AG04449 (cell line): ENCODE measurements at regions of chr1 and their contacts with region 1.

Region 1: DNA sequence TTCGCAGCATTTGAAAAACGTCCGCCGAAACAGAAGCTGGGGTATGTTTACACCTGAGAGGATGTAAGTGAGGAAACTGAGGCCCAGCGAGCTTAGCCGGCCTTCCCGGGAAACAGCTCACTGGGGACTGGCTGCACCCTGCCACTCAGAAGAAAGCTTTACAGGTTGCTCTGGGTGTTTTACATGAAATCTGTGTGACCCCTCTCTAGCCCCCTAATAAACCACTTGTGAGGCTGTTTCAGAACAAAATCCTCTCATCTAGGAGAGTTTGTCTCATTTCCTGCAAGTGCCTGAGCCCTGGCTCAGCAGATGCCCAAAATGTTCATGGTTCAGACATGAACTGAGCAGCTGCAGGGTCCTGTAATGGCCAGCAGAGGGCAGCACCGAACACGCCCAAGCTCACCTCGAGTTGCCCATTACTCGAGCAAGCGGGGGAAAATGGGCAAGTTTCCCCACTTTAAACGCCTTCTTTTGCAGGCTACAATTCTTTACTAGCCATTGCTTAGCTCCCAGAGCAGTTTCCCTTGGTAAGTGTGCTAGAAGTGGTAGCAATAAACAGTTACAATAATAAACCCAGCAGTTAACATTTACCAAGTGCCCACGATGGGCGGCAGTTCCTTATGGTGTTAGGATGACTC is 76.4 kb downstream of the FHAD1 start:
- DNase-seq: peak; percentile 46
- H3K4me3 ChIP-seq: no peak overlapping the region
- CTCF ChIP-seq: peak; percentile 97

Region 2: GRCh38 chr1:15128520-15129313 is 194.8 kb before region 1 on chr1:
- CTCF ChIA-PET with region 1: interaction called, 15 read pairs
- POLR2A ChIA-PET with region 1: no interaction called
- DNase-seq: no peak
- H3K4me3 ChIP-seq: no peak overlapping the region
- CTCF ChIP-seq: peak; percentile 91

Region 3: DNA sequence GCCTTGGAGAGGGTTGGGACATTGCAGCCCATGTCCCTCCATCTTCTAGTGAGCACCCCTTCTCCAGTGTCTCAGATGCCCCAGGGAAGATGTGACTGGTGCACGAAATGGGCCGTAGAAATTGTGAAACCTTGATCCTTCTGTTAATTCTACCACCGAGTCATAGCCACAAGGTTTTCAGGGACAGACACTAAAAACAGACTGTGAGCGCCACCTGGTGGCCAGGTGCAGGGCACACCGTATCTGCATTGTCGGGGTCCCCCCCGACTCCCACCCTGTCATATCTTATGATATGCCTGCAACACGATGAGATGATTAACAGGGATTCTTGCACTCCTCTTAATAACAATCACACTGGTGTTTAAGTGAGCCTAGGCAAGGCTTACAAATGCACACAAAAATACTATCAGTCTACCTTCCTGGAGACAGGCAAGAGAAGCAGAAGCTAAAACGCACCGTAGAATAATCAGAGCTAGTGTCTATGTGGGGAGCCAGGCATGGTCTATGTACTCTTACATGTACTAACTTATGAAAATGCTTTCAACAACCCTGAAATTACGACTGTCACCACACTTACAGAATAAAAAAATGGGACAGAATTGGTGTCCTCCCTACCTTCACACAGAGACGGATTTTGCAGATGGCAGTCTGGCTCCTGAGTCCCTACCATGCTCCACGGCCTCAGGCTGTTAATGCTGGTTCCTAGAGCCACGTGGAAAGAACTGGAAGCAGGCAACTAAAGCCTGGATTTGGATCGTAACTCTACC is 18.6 kb before region 1 on chr1:
- CTCF ChIA-PET with region 1: interaction called, 35 read pairs
- POLR2A ChIA-PET with region 1: no interaction called
- DNase-seq: no peak
- H3K4me3 ChIP-seq: peak overlapping the region; percentile 16
- CTCF ChIP-seq: peak; percentile 56

Region 4: GRCh38 chr1:15337656-15338402 is 14.4 kb after region 1 on chr1:
- CTCF ChIA-PET with region 1: interaction called, 63 read pairs
- POLR2A ChIA-PET with region 1: no interaction called
- DNase-seq: no peak
- H3K4me3 ChIP-seq: no peak overlapping the region
- CTCF ChIP-seq: no peak

Region 5: GRCh38 chr1:15409388-15410222 is 86.1 kb after region 1 on chr1 and contains the start of gene EFHD2:
- CTCF ChIA-PET with region 1: interaction called, 32 read pairs
- POLR2A ChIA-PET with region 1: no interaction called
- DNase-seq: no peak
- H3K4me3 ChIP-seq: peak within 1 kb of the TSS; percentile 83
- CTCF ChIP-seq: no peak

Region 6: DNA sequence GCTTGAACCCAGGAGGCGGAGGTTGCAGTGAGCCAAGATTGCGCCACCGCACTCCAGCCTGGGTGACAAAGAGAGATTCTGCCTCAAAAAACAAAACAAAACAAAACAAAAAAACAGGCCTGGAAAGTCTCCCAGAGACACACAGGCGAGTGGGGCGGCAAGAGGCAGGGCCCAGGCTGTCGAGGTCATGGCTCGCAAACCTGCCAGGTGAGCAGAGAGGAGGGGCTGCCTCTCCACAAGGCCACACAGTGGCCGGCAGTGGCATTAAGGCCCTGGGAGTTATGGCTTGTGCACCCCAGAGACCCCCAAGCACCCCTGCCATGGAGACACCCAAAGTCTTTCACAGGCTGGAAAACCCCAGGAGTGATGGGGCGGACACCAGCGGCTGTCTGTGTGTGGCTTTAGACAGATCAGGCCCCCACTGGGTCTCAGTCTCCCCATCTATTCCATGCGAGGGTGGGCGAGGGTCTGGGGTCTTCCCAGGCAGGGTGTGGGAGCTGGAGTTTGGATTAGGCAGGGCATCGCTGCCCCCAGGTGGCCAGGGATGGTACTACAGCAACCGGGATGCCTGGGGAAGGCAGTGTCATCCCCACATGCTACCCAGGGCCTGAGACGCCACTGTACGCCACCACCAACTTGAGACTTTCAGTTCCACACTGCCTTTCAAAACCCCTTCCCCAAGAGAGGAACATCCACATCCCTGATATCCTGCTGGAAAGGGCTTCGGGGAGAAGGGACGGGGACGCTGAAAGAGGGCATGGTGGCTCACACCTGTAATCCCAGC is 107.5 kb after region 1 on chr1:
- CTCF ChIA-PET with region 1: interaction called, 439 read pairs
- POLR2A ChIA-PET with region 1: interaction called, 5 read pairs
- DNase-seq: no peak
- H3K4me3 ChIP-seq: no peak overlapping the region
- CTCF ChIP-seq: peak; percentile 93

Region 7: DNA sequence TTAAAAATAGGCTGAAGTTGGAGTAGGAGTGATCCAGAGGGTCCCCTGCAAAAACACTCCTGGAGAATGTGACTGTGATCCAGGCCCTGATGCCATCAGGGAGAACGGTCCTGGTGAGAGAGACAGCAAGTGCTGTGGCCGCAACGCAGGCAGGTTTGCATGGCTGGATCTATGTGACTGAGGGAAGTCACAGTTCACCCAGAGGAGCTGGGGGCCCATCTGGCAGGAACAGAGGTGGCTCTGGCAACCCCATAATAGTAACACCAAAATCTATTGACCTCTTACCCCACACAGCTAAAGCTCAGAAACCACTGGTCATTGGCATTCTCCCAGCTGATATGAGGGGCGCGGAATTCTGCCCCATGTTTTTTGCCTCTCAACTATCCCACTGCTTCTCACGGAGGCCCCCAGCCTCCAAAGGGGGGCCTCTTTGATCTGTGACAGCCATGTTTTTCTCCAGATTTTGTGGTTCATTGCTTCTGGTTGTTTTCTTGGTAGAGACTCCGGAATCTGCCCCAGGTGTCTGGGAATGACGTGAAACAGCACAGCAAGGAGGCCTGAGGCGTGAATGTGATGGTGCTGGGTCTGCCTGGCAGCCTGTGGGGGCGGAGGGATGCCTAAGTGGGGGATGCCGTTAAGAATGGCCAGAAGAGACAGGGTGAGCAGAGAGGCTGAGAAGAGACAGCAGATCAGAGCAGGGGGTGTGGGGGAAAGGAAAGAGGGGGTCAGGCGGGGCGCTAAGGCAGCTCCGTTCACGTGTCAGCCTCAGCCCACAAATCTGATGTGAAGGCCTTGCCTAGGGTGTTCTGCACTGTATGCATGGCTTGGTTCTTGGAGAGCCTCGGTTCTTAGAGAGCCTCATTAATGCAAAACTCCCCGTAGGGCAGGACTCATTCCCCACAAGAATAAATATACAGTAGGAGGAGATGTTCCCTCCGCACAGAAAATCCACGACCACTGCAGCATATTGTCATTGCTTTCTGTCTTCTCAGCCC is 177.0 kb after region 1 on chr1:
- CTCF ChIA-PET with region 1: interaction called, 16 read pairs
- POLR2A ChIA-PET with region 1: no interaction called
- DNase-seq: no peak
- H3K4me3 ChIP-seq: no peak overlapping the region
- CTCF ChIP-seq: no peak

Region 8: GRCh38 chr1:15562031-15562729 is 238.7 kb after region 1 on chr1:
- CTCF ChIA-PET with region 1: no interaction called
- POLR2A ChIA-PET with region 1: no interaction called
- DNase-seq: no peak
- H3K4me3 ChIP-seq: no peak overlapping the region
- CTCF ChIP-seq: no peak